Posterior cingulate gyrus (tissue), 11 donors: ENCODE measurements at regions of chr2 and their contacts with region 1.

Region 1: GRCh38 chr2:95115418-95115817 is 6.2 kb downstream of the MRPS5 start:
- DNase-seq: peak; percentile 26 to 94 (median 74)

Region 2: DNA sequence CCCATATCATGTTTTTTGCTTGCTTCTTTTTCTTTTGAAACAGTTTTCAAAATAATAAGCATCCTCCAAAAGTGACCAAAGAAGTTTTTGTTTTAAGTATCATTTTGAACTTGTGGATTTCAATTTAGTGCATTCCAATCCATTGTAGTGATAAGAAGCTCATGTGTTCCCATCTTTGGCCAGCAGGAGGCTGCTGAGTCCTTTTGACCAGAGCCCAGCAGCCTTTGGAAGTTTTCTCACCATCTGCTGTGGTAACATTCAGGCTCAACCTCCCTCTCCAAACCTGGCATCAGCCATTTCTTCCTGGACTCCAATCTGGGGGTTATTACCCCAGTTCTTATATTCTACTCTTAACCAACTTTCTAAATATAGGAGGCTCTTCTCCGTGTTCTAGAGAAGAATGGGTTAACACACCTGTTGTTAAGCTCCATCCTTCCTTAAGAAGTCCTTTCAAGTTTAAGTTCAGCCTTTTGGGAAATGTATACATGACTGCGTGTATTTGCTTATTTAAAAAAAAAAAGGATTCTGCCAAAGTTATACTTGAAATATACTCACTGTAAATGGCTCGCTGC is 128.9 kb before region 1 on chr2:
- intact Hi-C with region 1: loop called (anchors 2 kb)
- DNase-seq: peak in 6 of 10 donors; percentile 55 to 94 (median 69)

Region 3: GRCh38 chr2:95022309-95023221 is 92.9 kb before region 1 on chr2:
- intact Hi-C with region 1: loop called (anchors 1 kb)
- DNase-seq: peak; percentile 81 to 97 (median 88)

Region 4: DNA sequence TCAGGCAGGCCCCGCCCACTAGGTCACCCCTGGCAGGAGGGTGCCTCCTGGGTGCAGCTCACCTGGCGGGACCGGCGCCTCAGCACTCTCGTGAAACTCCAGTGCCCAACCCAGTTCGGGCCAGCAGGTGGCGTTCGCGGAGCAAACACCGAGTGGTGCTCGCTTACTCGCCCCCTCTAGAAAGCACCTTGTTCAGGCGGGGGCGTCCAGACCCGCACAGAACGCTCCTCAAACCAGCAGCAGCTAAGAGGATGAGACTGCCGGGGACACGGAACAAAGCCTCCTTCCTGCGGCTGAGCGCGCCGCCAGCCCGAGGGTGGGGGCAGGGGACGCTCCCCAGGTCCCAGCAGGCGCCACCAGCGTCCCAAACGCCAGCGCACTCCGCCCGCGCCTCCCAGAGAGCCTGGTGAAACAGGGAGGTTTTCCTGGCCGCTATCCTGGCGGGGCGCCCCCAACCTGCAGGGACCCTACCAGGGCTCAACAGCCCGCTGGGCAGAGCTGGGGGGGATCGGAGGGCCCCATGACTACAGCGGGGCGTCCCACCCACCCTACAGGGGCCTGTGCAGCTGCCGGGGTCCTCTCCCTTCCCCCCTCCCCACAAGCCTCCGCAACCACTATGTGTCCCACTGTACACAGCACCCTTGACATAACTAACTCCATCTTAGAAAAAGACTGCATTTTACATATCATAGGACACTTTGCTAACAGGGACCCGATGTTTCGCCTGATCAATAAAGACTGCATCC is 38.5 kb before region 1 on chr2:
- intact Hi-C with region 1: loop called (anchors 5 kb)
- DNase-seq: peak; percentile 75 to 98 (median 88)

Region 5: GRCh38 chr2:95159690-95160449 is 44.5 kb after region 1 on chr2 and contains the start of gene ZNF514:
- intact Hi-C with region 1: loop called (anchors 5 kb)
- DNase-seq: peak; percentile 68 to 97 (median 76)

Region 6: DNA sequence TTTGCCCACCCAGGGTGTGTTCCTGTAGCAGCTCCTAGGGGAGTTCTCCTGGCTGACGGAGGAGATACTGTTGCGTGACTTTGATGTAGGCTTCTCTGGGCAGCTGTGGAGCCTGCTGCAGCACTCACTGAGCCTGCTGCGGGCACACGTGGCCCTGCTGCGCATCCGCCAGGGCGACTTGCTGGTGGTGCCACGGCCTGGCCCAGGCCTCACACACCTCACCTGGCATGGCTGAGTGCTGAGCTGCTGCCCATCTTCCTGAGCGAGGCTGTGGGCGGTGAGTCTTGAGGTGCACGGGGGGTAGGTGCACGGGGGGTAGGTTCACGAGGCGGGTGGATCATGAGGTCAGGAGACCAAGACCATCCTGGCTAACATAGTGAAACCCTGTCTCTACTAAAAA is 684.5 kb after region 1 on chr2:
- intact Hi-C with region 1: no loop called
- DNase-seq: peak in 2 of 10 donors; percentile 56 to 71